Activated CD4-positive, alpha-beta memory T cell treated with anti-CD3 and anti-CD28 coated beads for 36 hours (primary cell): ENCODE measurements at regions of chr10 and their contacts with region 1.

Region 1: DNA sequence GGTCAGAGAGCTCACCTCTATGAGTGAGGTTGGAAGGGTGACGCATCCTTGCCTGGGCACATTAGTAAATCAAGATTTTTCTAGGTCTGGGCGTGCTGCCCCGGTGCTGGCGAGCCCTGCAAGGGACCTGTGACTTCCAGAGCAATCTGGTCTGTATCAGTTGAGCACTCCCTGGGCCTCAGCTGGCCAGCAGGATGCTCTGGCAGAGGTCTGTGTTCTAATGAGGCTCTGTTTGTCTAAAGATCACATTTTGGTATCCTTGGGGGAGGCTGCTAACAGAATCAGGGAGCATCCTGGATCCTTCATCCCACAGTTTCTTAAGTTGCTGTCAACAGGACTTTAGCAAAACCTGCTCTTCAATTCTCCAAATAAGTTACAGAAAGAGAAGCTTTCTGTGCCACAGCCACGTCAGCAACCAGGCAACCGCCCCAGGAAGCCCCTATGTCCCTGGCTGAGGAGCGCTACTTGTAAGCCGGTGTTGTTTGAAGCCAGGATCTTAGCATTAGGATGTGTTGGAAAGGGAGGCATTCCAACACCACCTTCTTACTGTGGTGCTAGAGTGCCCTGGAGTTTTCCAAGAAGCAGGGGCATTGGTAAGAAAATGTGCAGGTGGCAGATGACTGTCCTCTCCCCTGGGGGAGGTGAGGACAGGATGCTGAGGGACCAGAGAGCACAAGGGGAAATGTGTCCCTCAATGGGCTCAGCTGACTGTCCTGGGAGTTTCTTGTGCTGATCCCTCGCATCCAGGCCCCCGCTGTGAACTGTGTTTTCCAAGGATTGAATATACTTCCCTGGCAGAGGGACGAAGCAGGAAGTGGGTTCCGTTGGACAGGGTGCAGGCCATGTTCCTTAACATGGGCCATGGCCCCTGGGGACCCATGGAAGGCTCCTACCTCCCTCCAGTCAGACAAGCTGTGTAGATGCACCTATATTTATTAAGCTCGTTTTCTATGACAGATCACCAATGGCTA is 139.8 kb upstream of the GDF10 start:
- DNase-seq: no peak
- H3K4me3 Mint-ChIP-seq: no peak overlapping the region
- H3K27ac Mint-ChIP-seq: no peak overlapping the region
- H3K4me1 Mint-ChIP-seq: peaks cover 12% of the 10 kb centered on the region
- H3K27me3 Mint-ChIP-seq: no peaks in the 10 kb centered on the region

Region 2: DNA sequence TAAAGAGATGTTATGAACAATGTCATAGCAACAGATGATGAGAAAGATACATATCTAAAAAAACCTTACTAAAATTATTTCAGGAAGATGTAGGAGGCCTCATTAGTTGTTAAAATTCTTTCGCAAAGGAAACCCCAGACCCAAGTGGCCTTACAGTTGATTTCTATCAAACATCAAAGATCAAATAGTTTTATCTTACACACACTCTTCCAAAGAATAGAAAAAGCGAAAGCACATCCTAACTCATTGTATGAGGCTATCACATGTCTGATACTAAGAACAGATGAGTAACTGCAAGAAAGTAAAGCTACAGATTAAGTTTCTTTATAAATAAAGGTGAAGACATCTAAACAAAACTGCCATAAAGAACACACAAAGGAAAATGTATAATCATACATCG is 56.9 kb after region 1 on chr10:
- CTCF ChIA-PET with region 1: no interaction called
- POLR2A ChIA-PET with region 1: no interaction called
- intact Hi-C with region 1: loop called (anchors 2 kb)
- DNase-seq: no peak
- H3K4me3 Mint-ChIP-seq: no peak overlapping the region
- H3K27ac Mint-ChIP-seq: peak overlapping the region; percentile 49
- H3K4me1 Mint-ChIP-seq: peaks cover 32% of the 10 kb centered on the region
- H3K27me3 Mint-ChIP-seq: no peaks in the 10 kb centered on the region